Activated T-helper 2 cell treated with anti-CD3 and anti-CD28 coated beads, Interferon-gamma antibody, Interleukin-2, Interleukin-4, amounts not matched to agents 10 μg/mL and 5 μg/mL and 100 μg/mL, durations not matched to agents 14 hours and 24 hours and 36 hours (primary cell): ENCODE measurements at regions of chr7 and their contacts with region 1.

Region 1: GRCh38 chr7:18666107-18666728 is 170.7 kb downstream of the HDAC9 start:
- DNase-seq: peak; percentile 42
- H3K4me3 Mint-ChIP-seq: no peak overlapping the region
- H3K27ac Mint-ChIP-seq: no peak overlapping the region
- H3K4me1 Mint-ChIP-seq: no peaks in the 10 kb centered on the region
- H3K27me3 Mint-ChIP-seq: no peaks in the 10 kb centered on the region

Region 2: GRCh38 chr7:17506095-17506494 is 1160.1 kb before region 1 on chr7:
- intact Hi-C with region 1: no loop called
- DNase-seq: no peak
- H3K4me3 Mint-ChIP-seq: no peak overlapping the region
- H3K27ac Mint-ChIP-seq: no peak overlapping the region
- H3K4me1 Mint-ChIP-seq: no peaks in the 10 kb centered on the region
- H3K27me3 Mint-ChIP-seq: peaks cover 3% of the 10 kb centered on the region

Region 3: DNA sequence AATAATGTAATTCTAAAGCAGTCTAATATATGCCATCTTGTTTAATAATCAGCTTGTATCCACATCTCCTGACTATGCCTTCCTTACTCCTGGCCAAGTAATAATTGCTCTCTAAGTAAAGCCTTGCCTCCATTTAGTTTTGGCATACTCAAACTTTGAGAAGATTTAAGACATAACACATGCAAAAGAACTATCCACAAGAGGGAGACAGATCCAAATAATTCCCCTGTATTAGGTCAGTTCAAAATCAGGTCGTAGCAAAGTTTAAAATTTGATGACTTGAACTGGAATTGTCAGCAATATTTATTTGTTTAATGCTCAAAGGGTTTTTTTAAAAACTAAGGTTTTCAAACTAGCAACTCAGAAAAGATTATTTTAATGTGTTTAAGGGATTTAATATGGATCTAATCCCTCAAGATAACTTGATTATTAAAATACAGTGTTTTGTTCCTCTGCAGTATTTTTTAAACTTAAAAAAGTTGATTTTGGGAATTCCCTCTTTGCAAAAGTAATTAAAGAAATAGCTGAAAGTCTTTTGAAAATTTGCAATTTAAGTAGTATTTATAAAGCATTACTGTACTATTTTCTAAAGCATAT is 75.4 kb before region 1 on chr7:
- intact Hi-C with region 1: loop called (anchors 1 kb)
- DNase-seq: no peak
- H3K4me3 Mint-ChIP-seq: no peak overlapping the region
- H3K27ac Mint-ChIP-seq: no peak overlapping the region
- H3K4me1 Mint-ChIP-seq: no peaks in the 10 kb centered on the region
- H3K27me3 Mint-ChIP-seq: no peaks in the 10 kb centered on the region

Region 4: GRCh38 chr7:18727115-18727870 is 61.1 kb after region 1 on chr7:
- intact Hi-C with region 1: no loop called
- DNase-seq: no peak
- H3K4me3 Mint-ChIP-seq: no peak overlapping the region
- H3K27ac Mint-ChIP-seq: no peak overlapping the region
- H3K4me1 Mint-ChIP-seq: no peaks in the 10 kb centered on the region
- H3K27me3 Mint-ChIP-seq: no peaks in the 10 kb centered on the region

Region 5: DNA sequence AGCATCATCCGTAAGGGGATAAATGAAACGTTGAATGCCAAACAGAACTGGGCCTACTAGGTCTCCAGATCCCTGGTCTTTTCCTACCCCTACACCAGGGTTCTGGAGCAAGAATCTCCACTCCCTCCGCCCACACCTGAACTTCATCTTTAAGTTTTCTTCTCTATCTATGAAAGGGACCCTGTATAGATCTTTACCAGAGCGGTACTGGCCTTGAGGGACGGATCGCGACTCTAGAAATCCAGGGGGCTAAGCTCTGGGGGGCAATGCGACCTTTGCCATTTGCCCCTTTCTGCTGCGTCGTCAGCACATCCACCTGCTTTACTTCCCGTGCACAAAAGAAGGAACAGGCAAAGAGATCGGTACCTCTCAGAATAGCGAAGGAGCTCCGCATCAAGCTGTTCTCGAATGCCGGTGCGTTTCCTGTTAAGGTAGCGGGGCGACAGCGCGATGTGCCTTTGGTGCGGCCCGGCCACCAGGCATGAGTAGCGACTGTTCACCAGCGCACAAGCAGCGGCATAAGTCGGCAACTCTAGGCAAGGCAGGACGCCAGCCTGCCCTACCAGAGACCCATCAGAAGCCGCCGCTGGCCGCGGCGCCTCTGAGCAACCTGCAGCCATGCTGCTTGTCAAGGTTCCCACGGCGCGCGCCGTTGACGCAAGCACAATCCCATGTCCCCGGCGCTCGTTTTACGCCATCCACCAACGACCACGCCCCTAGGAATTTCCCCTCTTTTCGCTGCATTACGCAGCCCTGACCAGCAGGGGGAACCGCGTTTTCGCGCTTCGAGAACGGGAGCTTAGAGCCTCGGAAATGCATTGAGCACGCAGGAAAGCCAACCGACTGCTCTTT is 1042.4 kb after region 1 on chr7 and contains the start of gene POLR1F:
- intact Hi-C with region 1: no loop called
- DNase-seq: peak; percentile 93
- H3K4me3 Mint-ChIP-seq: peak within 1 kb of the TSS; percentile 93
- H3K27ac Mint-ChIP-seq: peak within 1 kb of the TSS; percentile 88
- H3K4me1 Mint-ChIP-seq: peaks cover 39% of the 10 kb centered on the region
- H3K27me3 Mint-ChIP-seq: peaks cover 8% of the 10 kb centered on the region
- total RNA-seq, gene POLR1F: 32.5 and 41.1 TPM in 2 replicates